Activated naive CD4-positive, alpha-beta T cell treated with anti-CD3 and anti-CD28 coated beads, Interleukin-2, amount 10 ng/mL, durations not matched to agents 7 days and 5 days (primary cell): ENCODE measurements at regions of chr5 and their contacts with region 1.

Region 1: DNA sequence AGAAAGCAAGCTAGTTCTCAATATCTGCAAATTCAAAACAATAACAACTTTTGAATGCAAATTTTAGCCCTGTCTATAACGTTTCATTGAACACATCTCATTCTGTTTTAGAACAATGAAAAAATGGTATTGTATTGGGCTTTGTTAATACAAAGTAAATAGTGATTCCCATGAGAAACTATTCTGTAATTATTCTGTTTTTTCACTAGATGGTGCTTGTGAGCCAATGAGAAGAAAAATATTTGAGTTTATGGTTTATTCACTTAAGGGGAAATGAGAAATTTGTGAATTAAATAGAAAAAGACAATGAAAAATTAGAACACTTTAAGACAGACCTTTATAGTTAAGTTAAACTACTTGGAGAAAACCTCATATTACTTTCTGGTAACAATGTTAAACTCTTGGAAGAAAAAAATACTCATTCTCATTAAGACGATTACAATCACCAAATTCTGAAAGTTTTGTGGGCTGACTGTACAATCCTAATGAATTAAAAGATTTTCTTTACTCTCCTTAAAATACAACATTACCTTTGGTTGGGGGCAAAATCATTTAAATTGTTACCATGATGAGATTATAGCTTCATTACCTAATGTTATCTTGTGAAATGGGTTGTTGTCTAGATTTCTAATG is 127.0 kb downstream of the NNT start:
- DNase-seq: no peak
- H3K4me3 Mint-ChIP-seq: no peak overlapping the region
- H3K27ac Mint-ChIP-seq: no peak overlapping the region
- H3K4me1 Mint-ChIP-seq: no peaks in the 10 kb centered on the region
- H3K27me3 Mint-ChIP-seq: peaks cover 5% of the 10 kb centered on the region

Region 2: GRCh38 chr5:43268188-43268820 is 461.7 kb before region 1 on chr5:
- CTCF ChIA-PET with region 1: no interaction called
- DNase-seq: no peak
- H3K4me3 Mint-ChIP-seq: no peak overlapping the region
- H3K27ac Mint-ChIP-seq: no peak overlapping the region
- H3K4me1 Mint-ChIP-seq: peaks cover 11% of the 10 kb centered on the region
- H3K27me3 Mint-ChIP-seq: peaks cover 29% of the 10 kb centered on the region

Region 3: GRCh38 chr5:43674536-43674935 is 55.4 kb before region 1 on chr5:
- CTCF ChIA-PET with region 1: no interaction called
- DNase-seq: no peak
- H3K4me3 Mint-ChIP-seq: no peak overlapping the region
- H3K27ac Mint-ChIP-seq: no peak overlapping the region
- H3K4me1 Mint-ChIP-seq: peaks cover 2% of the 10 kb centered on the region
- H3K27me3 Mint-ChIP-seq: no peaks in the 10 kb centered on the region

Region 4: DNA sequence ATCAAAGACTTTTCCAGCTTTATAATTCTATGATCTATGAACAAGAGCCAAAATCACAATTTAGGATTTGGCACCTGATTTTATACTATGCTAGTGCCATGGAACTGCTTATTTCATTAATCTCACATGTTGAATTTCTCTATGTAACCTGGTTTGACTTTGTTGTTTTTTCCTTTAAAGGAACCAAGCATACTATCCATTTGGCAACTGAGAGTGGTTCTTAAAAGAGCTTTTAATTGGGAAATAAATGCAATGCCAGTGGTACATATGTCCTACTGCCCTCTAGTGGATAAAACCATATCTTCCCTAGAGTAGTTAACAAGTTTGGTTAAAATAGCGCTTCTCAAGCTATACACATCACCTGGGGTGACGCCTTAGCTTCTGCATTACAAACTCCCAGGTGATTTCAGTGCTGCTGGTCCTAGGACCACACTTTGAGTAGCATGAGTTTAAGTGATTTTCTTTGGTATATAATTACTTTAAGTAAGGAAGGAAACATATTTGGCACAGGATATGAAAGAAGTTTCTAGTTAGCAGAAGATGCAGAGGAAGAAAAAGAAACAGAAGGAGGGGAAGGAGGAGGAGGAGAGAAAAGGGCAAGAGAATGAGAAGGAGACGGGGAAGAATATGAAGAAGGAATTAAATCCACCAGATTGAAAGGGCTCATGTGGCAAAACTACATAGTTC is 602.5 kb after region 1 on chr5:
- CTCF ChIA-PET with region 1: interaction called, 17 read pairs
- DNase-seq: no peak
- H3K4me3 Mint-ChIP-seq: no peak overlapping the region
- H3K27ac Mint-ChIP-seq: no peak overlapping the region
- H3K4me1 Mint-ChIP-seq: no peaks in the 10 kb centered on the region
- H3K27me3 Mint-ChIP-seq: no peaks in the 10 kb centered on the region